MCF 10A (cell line): ENCODE measurements at regions of chrX and their contacts with region 1.

Region 1: DNA sequence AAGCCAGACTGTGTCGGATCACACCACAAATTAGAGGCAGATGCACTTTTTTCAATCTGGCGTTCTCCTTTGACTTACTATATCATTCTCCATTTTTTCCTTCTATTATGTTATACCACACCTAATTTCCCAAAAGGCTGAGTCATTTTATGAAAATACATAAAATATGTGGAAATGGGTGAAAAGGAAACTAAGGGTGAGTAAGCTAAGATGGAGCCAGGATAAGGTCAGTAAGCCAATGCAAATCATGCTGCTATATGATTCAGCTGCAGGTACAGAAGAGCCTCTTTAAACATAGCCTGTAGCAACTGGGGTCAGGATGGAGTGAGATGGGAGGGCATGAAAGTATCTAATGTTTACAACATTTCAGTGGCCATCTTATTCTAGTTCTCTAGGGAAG is 94.0 kb upstream of the TEX13A start:
- DNase-seq: peak; percentile 78
- H3K4me3 Mint-ChIP-seq: peak overlapping the region; percentile 73
- H3K27ac Mint-ChIP-seq: peak overlapping the region; percentile 87
- H3K4me1 Mint-ChIP-seq: peaks cover 9% of the 10 kb centered on the region
- H3K27me3 Mint-ChIP-seq: peaks cover 57% of the 10 kb centered on the region
- CTCF ChIP-seq: no peak

Region 2: GRCh38 chrX:104391906-104392305 is 922.6 kb before region 1 on chrX:
- CTCF ChIA-PET with region 1: no interaction called
- POLR2A ChIA-PET with region 1: no interaction called
- intact Hi-C with region 1: no loop called
- DNase-seq: no peak
- H3K4me3 Mint-ChIP-seq: no peak overlapping the region
- H3K27ac Mint-ChIP-seq: peak overlapping the region; percentile 80
- H3K4me1 Mint-ChIP-seq: peaks cover 10% of the 10 kb centered on the region
- H3K27me3 Mint-ChIP-seq: peaks cover 19% of the 10 kb centered on the region
- CTCF ChIP-seq: no peak

Region 3: GRCh38 chrX:104804018-104804417 is 510.4 kb before region 1 on chrX:
- CTCF ChIA-PET with region 1: no interaction called
- POLR2A ChIA-PET with region 1: no interaction called
- intact Hi-C with region 1: no loop called
- DNase-seq: no peak
- H3K4me3 Mint-ChIP-seq: no peak overlapping the region
- H3K27ac Mint-ChIP-seq: no peak overlapping the region
- H3K4me1 Mint-ChIP-seq: no peaks in the 10 kb centered on the region
- H3K27me3 Mint-ChIP-seq: peaks cover 83% of the 10 kb centered on the region
- CTCF ChIP-seq: no peak

Region 4: DNA sequence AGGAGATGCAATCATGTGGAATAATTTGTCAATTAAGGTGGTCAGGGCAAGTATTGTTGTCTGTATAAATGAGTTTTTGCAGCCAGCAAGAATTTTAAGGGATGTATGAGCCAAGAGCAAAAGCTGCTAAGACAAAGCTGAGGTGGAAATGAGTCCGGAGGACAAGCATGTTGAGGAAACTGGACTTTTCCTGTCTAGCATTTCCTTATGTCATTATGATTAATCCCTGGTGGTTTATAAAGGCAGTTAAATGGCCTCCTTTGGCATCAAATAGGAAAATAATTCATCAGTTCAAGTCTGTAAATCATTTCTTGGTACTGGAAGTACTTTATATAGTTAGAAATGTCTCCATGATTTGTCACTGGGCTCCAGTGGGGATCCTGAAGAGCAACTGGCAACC is 32.4 kb before region 1 on chrX:
- CTCF ChIA-PET with region 1: no interaction called
- POLR2A ChIA-PET with region 1: no interaction called
- intact Hi-C with region 1: no loop called
- DNase-seq: no peak
- H3K4me3 Mint-ChIP-seq: no peak overlapping the region
- H3K27ac Mint-ChIP-seq: no peak overlapping the region
- H3K4me1 Mint-ChIP-seq: peaks cover 3% of the 10 kb centered on the region
- H3K27me3 Mint-ChIP-seq: peaks cover 61% of the 10 kb centered on the region
- CTCF ChIP-seq: no peak

Region 5: DNA sequence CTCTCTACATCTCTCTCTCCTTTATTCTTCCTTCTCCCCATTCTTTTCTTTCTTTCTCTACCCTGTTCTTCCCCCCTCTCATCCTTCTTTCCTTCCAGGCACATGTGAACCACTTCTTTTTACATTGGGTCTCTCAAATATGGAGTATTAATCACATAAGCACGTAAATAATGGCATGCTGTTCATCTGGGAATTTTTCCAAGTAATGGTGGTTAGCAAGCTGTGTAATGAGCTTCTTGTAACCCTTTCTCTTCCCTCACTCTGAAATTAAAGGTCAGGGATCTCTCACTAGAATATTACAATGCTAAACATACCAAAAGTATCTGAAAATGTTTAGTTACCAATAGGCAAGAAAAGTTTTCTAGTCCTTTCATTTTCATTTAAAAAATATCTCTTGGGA is 145.9 kb after region 1 on chrX:
- CTCF ChIA-PET with region 1: no interaction called
- POLR2A ChIA-PET with region 1: interaction called, 4 read pairs
- intact Hi-C with region 1: loop called (anchors 5 kb)
- DNase-seq: peak; percentile 51
- H3K4me3 Mint-ChIP-seq: peak overlapping the region; percentile 2
- H3K27ac Mint-ChIP-seq: peak overlapping the region; percentile 78
- H3K4me1 Mint-ChIP-seq: peaks cover 11% of the 10 kb centered on the region
- H3K27me3 Mint-ChIP-seq: peaks cover 67% of the 10 kb centered on the region
- CTCF ChIP-seq: no peak

Region 6: DNA sequence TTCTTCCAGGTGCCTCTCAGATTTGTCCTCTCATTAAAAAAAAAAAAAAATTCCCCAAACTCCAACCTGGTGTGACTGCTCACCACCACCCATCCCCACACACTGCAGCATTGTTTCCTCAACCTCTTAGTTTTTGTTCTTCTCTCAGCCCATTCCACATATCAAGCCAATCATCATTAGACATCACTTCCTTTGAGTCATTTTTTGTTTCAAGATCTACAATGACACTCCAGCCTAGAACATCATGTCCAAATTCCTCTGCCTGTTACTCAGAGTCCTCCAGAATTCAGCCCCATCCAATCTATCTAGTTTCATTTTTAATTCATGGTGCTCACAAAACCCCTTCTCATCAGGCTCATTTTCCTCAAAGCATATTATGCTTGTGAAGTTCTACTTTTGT is 168.5 kb after region 1 on chrX:
- CTCF ChIA-PET with region 1: no interaction called
- POLR2A ChIA-PET with region 1: no interaction called
- intact Hi-C with region 1: loop called (anchors 5 kb)
- DNase-seq: peak; percentile 63
- H3K4me3 Mint-ChIP-seq: peak overlapping the region; percentile 13
- H3K27ac Mint-ChIP-seq: peak overlapping the region; percentile 84
- H3K4me1 Mint-ChIP-seq: peaks cover 15% of the 10 kb centered on the region
- H3K27me3 Mint-ChIP-seq: peaks cover 31% of the 10 kb centered on the region
- CTCF ChIP-seq: no peak

Region 7: GRCh38 chrX:105701084-105702055 is 386.9 kb after region 1 on chrX:
- CTCF ChIA-PET with region 1: no interaction called
- POLR2A ChIA-PET with region 1: no interaction called
- intact Hi-C with region 1: loop called (anchors 5 kb)
- DNase-seq: peak; percentile 14
- H3K4me3 Mint-ChIP-seq: peak overlapping the region; percentile 11
- H3K27ac Mint-ChIP-seq: peak overlapping the region; percentile 53
- H3K4me1 Mint-ChIP-seq: peaks cover 14% of the 10 kb centered on the region
- H3K27me3 Mint-ChIP-seq: peaks cover 73% of the 10 kb centered on the region
- CTCF ChIP-seq: peak; percentile 30